ENCODE measurements at regions of chr1 and their contacts with region 1.

Region 1: DNA sequence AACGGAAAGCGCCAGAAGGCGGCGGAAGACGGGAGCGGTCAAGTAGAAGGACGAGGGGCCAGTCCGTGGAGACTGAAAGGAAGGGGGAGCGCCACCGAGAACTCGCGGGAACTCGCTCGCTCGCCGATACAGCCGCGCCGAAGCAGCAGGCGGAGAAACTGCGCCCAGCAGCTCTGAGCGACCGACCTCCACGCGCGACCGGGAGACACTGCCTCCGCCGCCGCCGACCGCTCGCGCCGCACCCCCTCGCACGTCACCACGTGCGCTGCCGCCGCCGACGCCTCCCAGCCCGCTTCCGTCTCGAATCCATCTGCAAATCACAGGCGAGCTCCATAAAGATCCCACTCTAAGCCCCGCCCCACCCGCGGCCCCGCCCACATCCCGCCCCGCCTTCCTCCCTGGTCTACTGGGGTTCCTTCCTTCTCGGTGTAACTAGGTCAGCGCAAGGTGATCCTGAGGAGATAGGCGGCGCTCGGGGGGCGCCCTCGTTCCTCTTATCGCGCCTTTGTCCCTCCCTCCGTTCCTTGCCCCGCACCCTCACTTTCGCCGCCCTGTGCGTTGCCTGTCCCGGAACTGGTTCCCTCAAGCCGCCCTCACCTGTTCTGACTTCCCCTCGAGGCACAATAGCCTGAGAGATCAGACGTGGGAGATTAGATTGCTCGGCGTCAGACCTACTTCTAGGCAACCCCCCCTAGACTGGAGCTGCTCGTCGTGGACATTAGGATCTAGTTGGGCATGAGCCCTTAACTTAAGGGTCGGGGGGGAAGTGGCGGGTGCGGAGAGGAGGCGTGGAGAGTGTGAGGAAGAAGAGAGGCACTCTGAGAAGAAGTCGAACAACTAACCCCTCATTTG is at the start of gene IVNS1ABP:
- DNase-seq: peak; percentile 97
- ATAC-seq: peak; percentile 81
- H3K4me3 Mint-ChIP-seq: peak within 1 kb of the TSS; percentile 90
- H3K27ac Mint-ChIP-seq: peak within 1 kb of the TSS; percentile 94
- H3K4me1 Mint-ChIP-seq: peaks cover 49% of the 10 kb centered on the region
- H3K27me3 Mint-ChIP-seq: no peaks in the 10 kb centered on the region
- total RNA-seq, gene IVNS1ABP: 216 to 234 TPM

Region 2: DNA sequence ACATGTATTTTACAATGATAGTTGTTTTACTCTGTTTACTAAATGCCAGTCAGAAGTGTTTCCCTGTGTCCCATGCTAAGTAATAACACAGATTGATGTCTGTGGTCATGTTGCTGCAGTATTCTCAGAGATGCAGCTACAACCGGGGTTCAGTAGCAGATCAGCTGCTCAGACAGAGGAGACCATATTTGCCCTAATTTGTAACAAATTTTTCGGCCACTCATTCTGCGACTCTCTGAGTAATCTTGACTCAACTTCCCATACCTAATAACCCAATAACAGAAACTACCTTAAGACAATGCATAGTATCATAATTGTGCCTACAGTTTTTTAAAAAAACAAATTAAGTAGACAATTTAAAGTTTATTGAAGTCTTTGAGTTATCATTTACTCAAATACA is 375.5 kb before region 1 on chr1:
- CTCF ChIA-PET with region 1: no interaction called
- POLR2A ChIA-PET with region 1: no interaction called
- DNase-seq: no peak
- ATAC-seq: no peak
- H3K4me3 Mint-ChIP-seq: no peak overlapping the region
- H3K27ac Mint-ChIP-seq: no peak overlapping the region
- H3K4me1 Mint-ChIP-seq: peaks cover 7% of the 10 kb centered on the region
- H3K27me3 Mint-ChIP-seq: no peaks in the 10 kb centered on the region

Region 3: GRCh38 chr1:184973272-184974055 is 343.8 kb before region 1 on chr1:
- CTCF ChIA-PET with region 1: no interaction called
- POLR2A ChIA-PET with region 1: no interaction called
- DNase-seq: peak; percentile 26
- ATAC-seq: peak; percentile 8
- H3K4me3 Mint-ChIP-seq: peak overlapping the region; percentile 88
- H3K27ac Mint-ChIP-seq: peak overlapping the region; percentile 89
- H3K4me1 Mint-ChIP-seq: peaks cover 47% of the 10 kb centered on the region
- H3K27me3 Mint-ChIP-seq: peaks cover 19% of the 10 kb centered on the region

Region 4: GRCh38 chr1:185300152-185300551 is 17.1 kb before region 1 on chr1:
- CTCF ChIA-PET with region 1: interaction called, 5 read pairs
- POLR2A ChIA-PET with region 1: interaction called, 10 read pairs
- DNase-seq: no peak
- ATAC-seq: no peak
- H3K4me3 Mint-ChIP-seq: no peak overlapping the region
- H3K27ac Mint-ChIP-seq: no peak overlapping the region
- H3K4me1 Mint-ChIP-seq: peaks cover 10% of the 10 kb centered on the region
- H3K27me3 Mint-ChIP-seq: no peaks in the 10 kb centered on the region

Region 5: DNA sequence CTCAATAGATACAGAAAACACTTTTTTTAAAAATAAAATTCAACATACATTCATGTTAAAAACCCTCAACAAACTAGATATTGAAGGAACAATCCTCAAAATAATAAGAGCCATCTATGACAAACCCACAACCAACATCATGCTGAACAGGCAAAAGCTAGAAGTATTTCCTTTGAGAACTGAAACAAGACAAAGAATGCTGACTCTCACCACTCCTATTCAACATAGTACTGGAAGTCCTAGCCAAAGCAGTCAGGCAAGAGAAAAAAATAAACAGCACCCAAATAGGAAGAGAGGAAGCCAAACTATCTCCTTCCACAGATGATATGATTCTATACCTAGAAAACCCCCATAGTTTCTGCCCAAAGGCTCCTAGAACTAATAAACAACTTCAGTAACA is 45.9 kb after region 1 on chr1:
- CTCF ChIA-PET with region 1: no interaction called
- POLR2A ChIA-PET with region 1: no interaction called
- DNase-seq: no peak
- ATAC-seq: no peak
- H3K4me3 Mint-ChIP-seq: no peak overlapping the region
- H3K27ac Mint-ChIP-seq: no peak overlapping the region
- H3K4me1 Mint-ChIP-seq: peaks cover 24% of the 10 kb centered on the region
- H3K27me3 Mint-ChIP-seq: no peaks in the 10 kb centered on the region

Region 6: DNA sequence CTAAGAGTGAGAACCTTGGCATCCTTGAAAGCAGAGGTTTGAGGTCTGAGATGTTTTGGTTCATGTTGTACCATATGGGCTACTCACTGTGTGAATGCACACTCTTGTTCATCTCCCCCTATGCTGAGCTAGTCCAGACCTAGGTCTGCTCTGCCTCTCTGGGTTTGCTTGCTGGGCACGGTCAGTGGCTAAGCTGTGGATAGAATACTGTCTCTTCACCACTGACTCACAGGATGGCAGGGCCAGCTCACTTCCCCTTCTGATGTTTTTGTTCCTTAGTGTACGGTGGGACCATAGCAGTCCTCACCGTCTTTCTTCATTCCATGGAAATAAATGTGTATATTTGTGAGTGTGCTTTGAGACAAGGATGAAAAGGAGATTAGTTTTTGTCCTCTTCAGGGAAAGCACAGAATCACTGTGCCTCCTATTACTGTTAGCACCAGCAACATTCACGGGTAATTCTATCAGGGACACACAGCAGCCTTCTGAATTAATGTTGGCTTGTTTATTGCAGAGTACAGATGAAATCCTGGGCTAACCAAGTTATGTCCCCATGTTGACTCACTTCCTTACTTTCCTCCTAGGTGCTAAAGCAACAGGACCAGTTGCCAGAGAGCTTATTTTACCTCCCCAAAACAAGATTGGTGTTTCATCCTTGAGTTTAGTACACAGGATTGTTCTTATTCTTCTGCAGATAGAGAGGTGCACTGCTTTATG is 56.7 kb after region 1 on chr1:
- CTCF ChIA-PET with region 1: no interaction called
- POLR2A ChIA-PET with region 1: interaction called, 13 read pairs
- DNase-seq: no peak
- ATAC-seq: peak; percentile 29
- H3K4me3 Mint-ChIP-seq: no peak overlapping the region
- H3K27ac Mint-ChIP-seq: peak overlapping the region; percentile 66
- H3K4me1 Mint-ChIP-seq: peaks cover 33% of the 10 kb centered on the region
- H3K27me3 Mint-ChIP-seq: no peaks in the 10 kb centered on the region

Region 7: DNA sequence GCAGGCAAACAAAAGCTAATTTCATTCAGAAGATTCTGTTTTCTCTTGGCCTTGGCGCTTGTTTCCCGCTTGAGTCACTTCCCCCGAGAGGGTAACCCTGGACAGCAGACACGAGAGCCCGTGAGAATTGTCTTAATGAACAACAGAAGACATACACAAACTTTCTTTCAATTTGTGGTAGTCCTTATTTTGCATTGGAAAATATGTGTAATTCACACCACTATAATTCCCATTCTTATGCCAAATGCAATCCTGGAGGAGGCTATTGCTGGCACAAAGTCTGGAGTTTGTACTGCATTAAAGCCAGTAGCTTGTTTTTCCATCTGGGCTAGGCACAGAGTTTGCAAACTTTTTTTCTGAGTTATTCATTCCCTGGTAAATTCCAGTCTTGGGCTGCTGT is 109.6 kb after region 1 on chr1:
- CTCF ChIA-PET with region 1: interaction called, 5 read pairs
- POLR2A ChIA-PET with region 1: interaction called, 87 read pairs
- DNase-seq: no peak
- ATAC-seq: no peak
- H3K4me3 Mint-ChIP-seq: no peak overlapping the region
- H3K27ac Mint-ChIP-seq: peak overlapping the region; percentile 37
- H3K4me1 Mint-ChIP-seq: peaks cover 82% of the 10 kb centered on the region
- H3K27me3 Mint-ChIP-seq: no peaks in the 10 kb centered on the region

Region 8: GRCh38 chr1:185559684-185560331 is 242.5 kb after region 1 on chr1:
- CTCF ChIA-PET with region 1: interaction called, 46 read pairs
- POLR2A ChIA-PET with region 1: interaction called, 60 read pairs
- DNase-seq: peak; percentile 90
- ATAC-seq: peak; percentile 89
- H3K4me3 Mint-ChIP-seq: peak overlapping the region; percentile 58
- H3K27ac Mint-ChIP-seq: peak overlapping the region; percentile 92
- H3K4me1 Mint-ChIP-seq: peaks cover 55% of the 10 kb centered on the region
- H3K27me3 Mint-ChIP-seq: no peaks in the 10 kb centered on the region

Region 9: GRCh38 chr1:185595835-185596667 is 278.8 kb after region 1 on chr1:
- CTCF ChIA-PET with region 1: interaction called, 10 read pairs
- POLR2A ChIA-PET with region 1: interaction called, 5 read pairs
- DNase-seq: peak; percentile 60
- ATAC-seq: peak; percentile 76
- H3K4me3 Mint-ChIP-seq: no peak overlapping the region
- H3K27ac Mint-ChIP-seq: no peak overlapping the region
- H3K4me1 Mint-ChIP-seq: peaks cover 27% of the 10 kb centered on the region
- H3K27me3 Mint-ChIP-seq: no peaks in the 10 kb centered on the region

Region 10: DNA sequence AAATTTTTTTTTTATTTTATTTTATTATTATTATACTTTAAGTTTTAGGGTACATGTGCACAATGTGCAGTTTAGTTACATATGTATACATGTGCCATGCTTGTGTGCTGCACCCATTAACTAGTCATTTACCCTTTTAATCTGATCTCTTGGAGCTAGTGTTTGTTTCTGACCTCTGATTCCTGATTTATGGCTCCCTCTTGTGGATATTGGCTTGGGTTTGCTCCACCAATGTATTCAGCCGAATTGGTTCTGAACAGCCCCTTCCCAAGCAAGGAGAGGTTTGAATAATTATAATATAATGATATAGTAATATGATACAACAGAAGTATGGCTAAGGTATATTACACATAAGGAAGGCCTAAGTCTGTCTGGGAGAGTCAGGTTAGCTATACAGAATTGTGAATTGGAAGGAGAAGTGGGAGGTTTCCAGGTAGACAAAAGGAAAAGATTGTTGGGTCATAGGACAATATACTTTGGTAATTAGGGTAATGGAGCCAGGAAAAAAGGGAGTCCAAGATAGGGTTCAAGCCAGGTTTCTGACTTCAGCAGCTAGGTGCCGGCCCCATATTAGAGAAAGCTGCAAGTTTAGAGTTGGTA is 363.9 kb after region 1 on chr1:
- CTCF ChIA-PET with region 1: interaction called, 15 read pairs
- POLR2A ChIA-PET with region 1: interaction called, 33 read pairs
- DNase-seq: peak; percentile 54
- ATAC-seq: peak; percentile 67
- H3K4me3 Mint-ChIP-seq: no peak overlapping the region
- H3K27ac Mint-ChIP-seq: no peak overlapping the region
- H3K4me1 Mint-ChIP-seq: peaks cover 28% of the 10 kb centered on the region
- H3K27me3 Mint-ChIP-seq: peaks cover 6% of the 10 kb centered on the region

Region 11: GRCh38 chr1:185837711-185838498 is 520.6 kb after region 1 on chr1:
- CTCF ChIA-PET with region 1: no interaction called
- POLR2A ChIA-PET with region 1: no interaction called
- DNase-seq: no peak
- ATAC-seq: no peak
- H3K4me3 Mint-ChIP-seq: no peak overlapping the region
- H3K27ac Mint-ChIP-seq: no peak overlapping the region
- H3K4me1 Mint-ChIP-seq: no peaks in the 10 kb centered on the region
- H3K27me3 Mint-ChIP-seq: peaks cover 7% of the 10 kb centered on the region

Measured in activated CD8-positive, alpha-beta T cell treated with anti-CD3 and anti-CD28 coated beads, Interleukin-2, amount 10 ng/mL, durations not matched to agents 7 days and 5 days (primary cell).